Psoas muscle (tissue), 8 donors: ENCODE measurements at regions of chr7 and their contacts with region 1.

Region 1: GRCh38 chr7:30504347-30505173 is at the start of gene GGCT:
- DNase-seq: peak; percentile 99
- ATAC-seq: peak; percentile 97 to 100 (median 100)
- H3K4me3 ChIP-seq: peak within 1 kb of the TSS; percentile 99
- H3K27ac ChIP-seq: peak within 1 kb of the TSS; percentile 88
- H3K4me1 ChIP-seq: peaks cover 6% of the 10 kb centered on the region
- H3K27me3 ChIP-seq: no peaks in the 10 kb centered on the region
- CTCF ChIP-seq: no peak
- total RNA-seq, gene GGCT: 16.2 to 20.6 (median 17.0) TPM

Region 2: DNA sequence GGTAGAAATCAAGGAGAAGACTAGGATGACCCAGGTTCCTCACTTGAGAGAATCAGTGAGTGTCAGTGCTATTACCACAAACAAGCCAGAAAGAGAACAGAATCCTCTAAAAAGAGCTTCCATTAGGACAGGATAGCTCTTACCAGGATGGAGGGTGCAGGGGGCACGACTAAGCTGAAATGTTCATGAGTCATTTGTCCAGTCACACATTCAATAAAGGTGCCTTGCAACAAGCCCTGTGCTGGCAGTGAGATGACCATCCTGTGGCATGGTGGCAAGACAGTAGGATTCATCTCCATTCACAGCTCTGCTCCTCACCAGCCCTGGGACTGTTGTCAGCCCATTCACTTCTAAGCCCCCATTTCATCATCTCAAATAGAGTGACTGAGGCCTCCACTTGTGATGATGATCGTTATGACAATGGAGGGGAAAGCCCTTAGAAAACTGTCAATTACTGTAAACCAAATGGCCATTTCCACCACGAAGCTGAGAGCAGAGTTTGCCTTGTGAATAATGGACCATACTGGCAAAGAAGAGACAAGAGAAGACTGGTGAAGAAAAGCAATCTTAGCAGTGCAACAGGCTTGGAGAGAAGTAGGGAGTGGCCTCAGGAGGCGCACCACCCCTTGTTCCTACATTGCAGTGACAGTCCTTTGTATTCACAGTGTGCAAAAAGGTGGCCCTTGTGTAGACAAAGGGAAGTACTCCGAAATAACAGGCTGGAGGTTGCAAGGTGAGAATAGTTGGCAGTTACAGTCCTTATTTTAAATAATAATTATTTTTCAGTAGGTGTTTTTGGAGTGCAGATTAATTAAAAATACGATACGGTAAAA is 707.2 kb before region 1 on chr7:
- intact Hi-C with region 1: no loop called
- DNase-seq: no peak
- ATAC-seq: no peak
- H3K4me3 ChIP-seq: no peak overlapping the region
- H3K27ac ChIP-seq: no peak overlapping the region
- H3K4me1 ChIP-seq: no peaks in the 10 kb centered on the region
- H3K27me3 ChIP-seq: no peaks in the 10 kb centered on the region
- CTCF ChIP-seq: no peak

Region 3: DNA sequence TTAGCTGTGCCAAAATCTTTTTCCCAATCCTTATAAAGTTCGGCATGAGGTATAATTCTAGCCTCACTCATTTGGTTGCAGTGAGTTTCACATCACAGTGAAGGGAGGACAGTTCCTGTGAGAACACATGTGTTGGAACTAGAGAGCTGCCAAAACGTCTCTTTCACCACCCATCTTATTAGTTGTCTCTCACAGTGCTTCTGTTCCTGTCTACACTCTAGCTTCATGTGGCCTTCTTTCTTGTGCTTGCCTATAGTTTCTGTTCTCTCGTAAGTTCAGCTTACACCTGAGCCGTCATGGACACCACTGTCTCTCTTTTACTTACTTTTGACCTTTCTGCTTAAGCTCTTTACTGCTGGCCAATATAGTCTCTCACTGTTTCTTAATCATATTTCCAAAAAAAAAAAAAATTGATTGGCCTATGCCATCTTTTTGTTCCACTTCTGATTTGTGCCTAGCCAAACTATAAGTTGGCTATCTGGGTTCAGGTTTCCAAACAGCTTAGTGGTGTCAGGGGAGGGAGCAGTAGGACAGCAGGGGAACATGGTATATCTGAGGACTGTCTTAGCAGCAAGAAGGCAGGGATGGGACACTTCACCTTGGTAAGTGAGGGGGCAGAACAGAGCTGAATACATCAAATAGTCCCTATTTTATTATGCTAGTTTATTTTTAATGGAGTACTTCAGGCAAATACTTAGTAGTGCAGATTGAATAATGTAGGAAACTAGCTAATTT is 182.1 kb before region 1 on chr7:
- intact Hi-C with region 1: no loop called
- DNase-seq: no peak
- ATAC-seq: peak; percentile 81 to 96 (median 94)
- H3K4me3 ChIP-seq: peak overlapping the region; percentile 39
- H3K27ac ChIP-seq: peak overlapping the region; percentile 12
- H3K4me1 ChIP-seq: peaks cover 36% of the 10 kb centered on the region
- H3K27me3 ChIP-seq: no peaks in the 10 kb centered on the region
- CTCF ChIP-seq: no peak

Region 4: DNA sequence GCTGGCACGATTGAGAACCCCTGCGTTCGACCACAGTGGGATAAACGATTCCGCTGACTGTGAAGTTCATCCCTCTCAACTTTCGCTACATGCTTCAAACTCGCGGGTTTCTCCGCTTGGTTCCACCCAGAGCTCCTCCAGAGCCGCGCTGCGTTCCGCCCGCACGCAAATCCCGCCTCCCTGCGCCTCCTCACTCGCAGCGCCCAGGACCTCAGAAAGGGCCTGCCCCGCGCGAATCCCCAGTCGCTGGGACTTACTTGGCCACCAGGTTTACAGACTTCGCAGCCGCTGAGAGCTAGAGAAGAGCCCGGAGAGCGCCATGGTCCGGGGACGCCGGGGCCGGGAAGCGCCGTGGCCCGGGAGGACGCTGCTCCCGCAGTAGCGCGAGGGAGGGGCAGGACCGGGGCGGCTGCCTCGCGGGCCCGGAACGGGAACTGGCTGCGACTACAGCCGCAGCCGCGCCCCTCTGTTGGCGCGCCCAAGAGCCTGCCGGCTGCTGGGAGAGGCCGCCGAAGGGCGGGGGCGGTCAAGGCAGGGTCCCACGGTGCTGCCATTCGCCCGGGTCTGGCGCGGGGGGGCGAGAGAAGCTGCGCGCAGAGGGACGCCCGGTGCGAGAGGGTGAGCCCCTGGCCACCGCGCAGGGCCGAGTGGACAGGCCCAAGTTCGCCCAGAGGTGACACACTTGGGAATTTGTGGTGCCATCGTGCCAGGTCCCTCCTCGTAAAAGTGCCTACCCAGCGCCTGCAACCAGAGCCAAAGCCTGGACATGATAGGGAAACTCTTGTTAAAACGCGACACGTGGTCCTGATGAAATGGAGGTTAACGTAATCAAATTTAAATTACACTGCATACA is 26.0 kb before region 1 on chr7 and contains the start of gene NOD1:
- intact Hi-C with region 1: loop called in 1 of 2 experiments (anchors 2 kb)
- DNase-seq: peak; percentile 76 to 87
- ATAC-seq: peak; percentile 92 to 98 (median 94)
- H3K4me3 ChIP-seq: peak within 1 kb of the TSS; percentile 92
- H3K27ac ChIP-seq: peak within 1 kb of the TSS; percentile 88
- H3K4me1 ChIP-seq: peaks cover 24% of the 10 kb centered on the region
- H3K27me3 ChIP-seq: no peaks in the 10 kb centered on the region
- CTCF ChIP-seq: peak; percentile 18
- total RNA-seq, gene NOD1: 2.5 to 4.1 (median 2.9) TPM

Region 5: DNA sequence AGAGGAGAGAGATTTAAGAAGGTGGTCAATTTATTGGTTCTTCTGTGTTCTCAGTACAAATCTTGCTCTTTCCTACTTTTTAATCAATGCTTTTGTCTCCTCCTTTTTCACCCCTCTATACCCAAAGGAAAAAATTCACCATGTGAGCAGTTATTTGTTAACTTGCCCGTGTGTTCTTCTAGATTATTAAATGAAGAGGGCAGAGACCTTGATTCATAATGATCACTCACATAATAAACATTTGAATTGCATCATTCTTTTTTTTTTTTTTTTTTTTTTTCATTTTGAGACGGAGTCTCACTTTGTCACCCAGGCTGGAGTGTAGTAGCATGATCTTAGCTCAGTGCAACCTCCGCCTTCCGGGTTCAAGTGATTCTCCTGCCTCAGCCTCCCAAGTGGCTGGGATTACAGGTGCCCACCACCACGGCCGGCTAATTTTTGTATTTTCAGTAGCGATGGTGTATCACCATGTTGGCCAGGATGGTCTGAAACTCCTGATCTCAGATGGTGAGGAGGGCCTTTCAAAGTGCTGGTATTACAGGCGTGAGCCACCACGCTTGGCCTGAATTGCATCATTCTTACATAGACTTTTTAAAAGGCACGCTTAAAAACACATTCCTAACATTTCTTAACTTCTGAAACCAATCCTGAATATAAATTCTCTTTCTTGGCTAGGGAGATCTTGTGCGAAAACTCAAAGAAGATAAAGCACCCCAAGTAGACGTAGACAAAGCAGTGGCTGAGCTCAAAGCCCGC is 93.7 kb after region 1 on chr7:
- intact Hi-C with region 1: no loop called
- DNase-seq: no peak
- ATAC-seq: no peak
- H3K4me3 ChIP-seq: no peak overlapping the region
- H3K27ac ChIP-seq: no peak overlapping the region
- H3K4me1 ChIP-seq: peaks cover 21% of the 10 kb centered on the region
- H3K27me3 ChIP-seq: no peaks in the 10 kb centered on the region
- CTCF ChIP-seq: no peak